PC-9 (cell line): ENCODE measurements at regions of chr2 and their contacts with region 1.

Region 1: DNA sequence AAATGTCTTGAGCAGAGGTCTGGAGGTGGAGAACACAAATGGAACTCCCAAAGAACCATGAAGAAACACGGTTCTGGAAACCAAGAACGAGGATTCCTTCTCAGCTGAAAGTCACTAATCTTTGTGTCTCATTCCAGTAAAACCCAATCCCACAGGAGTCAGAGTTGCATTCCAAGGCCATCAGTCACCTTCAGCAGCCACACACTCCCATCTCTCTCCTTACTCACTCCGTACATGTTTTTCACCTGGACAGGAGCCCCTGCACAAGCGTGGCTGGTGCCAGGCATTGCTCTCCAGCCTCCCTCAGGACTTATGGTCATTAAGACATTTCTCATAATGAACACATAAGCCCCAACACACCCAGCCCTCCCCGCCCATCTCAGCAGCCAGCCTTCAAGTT is 175.4 kb upstream of the SIX2 start:
- DNase-seq: peak; percentile 76 to 92
- H3K4me3 ChIP-seq: no peak overlapping the region
- H3K27ac ChIP-seq: peak overlapping the region; percentile 74
- H3K4me1 ChIP-seq: peaks cover 28% of the 10 kb centered on the region
- H3K27me3 ChIP-seq: no peaks in the 10 kb centered on the region
- CTCF ChIP-seq: no peak

Region 2: GRCh38 chr2:45220227-45220626 is 35.6 kb after region 1 on chr2:
- CTCF ChIA-PET with region 1: no interaction called
- POLR2A ChIA-PET with region 1: no interaction called
- intact Hi-C with region 1: loop called (anchors 1 kb)
- DNase-seq: peak; percentile 24 to 47
- H3K4me3 ChIP-seq: no peak overlapping the region
- H3K27ac ChIP-seq: no peak overlapping the region
- H3K4me1 ChIP-seq: peaks cover 30% of the 10 kb centered on the region
- H3K27me3 ChIP-seq: no peaks in the 10 kb centered on the region
- CTCF ChIP-seq: no peak